Caco-2 (cell line): ENCODE measurements at regions of chr4 and their contacts with region 1.

Region 1: GRCh38 chr4:123661080-123661737 is 264.6 kb downstream of the SPRY1 start:
- DNase-seq: no peak
- H3K4me3 ChIP-seq: no peak overlapping the region
- H3K4me3 Mint-ChIP-seq: no peak overlapping the region
- H3K27ac Mint-ChIP-seq: no peak overlapping the region
- H3K4me1 ChIP-seq: peaks cover 6% of the 10 kb centered on the region; the same call in 1 of the 2 replicates
- H3K4me1 Mint-ChIP-seq: peaks cover 20% of the 10 kb centered on the region
- H3K27me3 ChIP-seq: no peaks in the 10 kb centered on the region
- H3K27me3 Mint-ChIP-seq: no peaks in the 10 kb centered on the region
- CTCF ChIP-seq: peak; percentile 41 to 54

Region 2: DNA sequence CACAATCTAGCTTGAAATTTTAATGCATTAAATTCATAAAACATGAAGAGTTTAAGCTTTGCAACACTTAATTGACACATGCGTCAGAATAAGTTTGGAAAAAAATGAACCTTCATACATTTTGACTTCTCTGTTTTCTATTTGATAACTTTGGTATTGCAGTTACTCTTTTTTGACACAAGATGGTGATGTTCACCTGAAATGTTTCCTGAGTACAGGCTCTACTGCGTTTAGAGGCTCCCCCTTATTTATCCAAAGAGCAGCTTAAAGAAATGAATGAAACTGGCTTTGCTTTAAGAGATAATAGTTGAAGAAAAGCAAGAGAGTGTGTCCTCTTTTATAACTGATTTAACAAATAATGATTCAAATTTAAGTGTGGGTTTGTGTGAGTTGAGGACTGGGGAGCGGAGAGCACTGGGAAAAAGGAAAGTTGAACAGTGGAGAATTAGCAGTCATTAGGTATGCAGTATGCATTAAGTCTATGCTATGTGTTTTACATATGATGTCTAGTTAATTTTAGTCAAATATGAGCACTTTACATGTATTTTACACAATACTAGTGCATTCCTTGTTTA is 558.2 kb before region 1 on chr4:
- CTCF ChIA-PET with region 1: interaction called, 3 read pairs
- POLR2A ChIA-PET with region 1: no interaction called
- intact Hi-C with region 1: loop called (anchors 1 kb)
- DNase-seq: peak in 1 of 2 experiments; percentile 34
- H3K4me3 ChIP-seq: no peak overlapping the region
- H3K4me3 Mint-ChIP-seq: no peak overlapping the region
- H3K27ac Mint-ChIP-seq: peak overlapping the region; percentile 3
- H3K4me1 ChIP-seq: peaks cover 3% of the 10 kb centered on the region; the same call in 1 of the 2 replicates
- H3K4me1 Mint-ChIP-seq: peaks cover 9% of the 10 kb centered on the region
- H3K27me3 ChIP-seq: no peaks in the 10 kb centered on the region
- H3K27me3 Mint-ChIP-seq: no peaks in the 10 kb centered on the region
- CTCF ChIP-seq: peak; percentile 46 to 57

Region 3: GRCh38 chr4:123127218-123127617 is 534.0 kb before region 1 on chr4:
- CTCF ChIA-PET with region 1: no interaction called
- POLR2A ChIA-PET with region 1: no interaction called
- intact Hi-C with region 1: loop called (anchors 5 kb)
- DNase-seq: no peak
- H3K4me3 ChIP-seq: no peak overlapping the region
- H3K4me3 Mint-ChIP-seq: no peak overlapping the region
- H3K27ac Mint-ChIP-seq: no peak overlapping the region
- H3K4me1 ChIP-seq: 0 out of 2 replicates have a peak, but pooled peaks cover 8% of the 10 kb centered on the region
- H3K4me1 Mint-ChIP-seq: no peaks in the 10 kb centered on the region
- H3K27me3 ChIP-seq: no peaks in the 10 kb centered on the region
- H3K27me3 Mint-ChIP-seq: no peaks in the 10 kb centered on the region
- CTCF ChIP-seq: no peak

Region 4: GRCh38 chr4:123564758-123565346 is 96.4 kb before region 1 on chr4:
- CTCF ChIA-PET with region 1: no interaction called
- POLR2A ChIA-PET with region 1: no interaction called
- intact Hi-C with region 1: loop called (anchors 1 kb)
- DNase-seq: peak; percentile 80 to 81
- H3K4me3 ChIP-seq: no peak overlapping the region
- H3K4me3 Mint-ChIP-seq: no peak overlapping the region
- H3K27ac Mint-ChIP-seq: no peak overlapping the region
- H3K4me1 ChIP-seq: peaks cover 20% of the 10 kb centered on the region
- H3K4me1 Mint-ChIP-seq: peaks cover 22% of the 10 kb centered on the region
- H3K27me3 ChIP-seq: no peaks in the 10 kb centered on the region
- H3K27me3 Mint-ChIP-seq: no peaks in the 10 kb centered on the region
- CTCF ChIP-seq: peak; percentile 88 to 99

Region 5: GRCh38 chr4:124262211-124263179 is 601.3 kb after region 1 on chr4:
- CTCF ChIA-PET with region 1: no interaction called
- POLR2A ChIA-PET with region 1: no interaction called
- intact Hi-C with region 1: loop called (anchors 5 kb)
- DNase-seq: peak; percentile 58 to 74
- H3K4me3 ChIP-seq: no peak overlapping the region
- H3K4me3 Mint-ChIP-seq: no peak overlapping the region
- H3K27ac Mint-ChIP-seq: no peak overlapping the region
- H3K4me1 ChIP-seq: no peaks in the 10 kb centered on the region
- H3K4me1 Mint-ChIP-seq: no peaks in the 10 kb centered on the region
- H3K27me3 ChIP-seq: no peaks in the 10 kb centered on the region
- H3K27me3 Mint-ChIP-seq: peaks cover 6% of the 10 kb centered on the region
- CTCF ChIP-seq: peak; percentile 77 to 79